ENCODE measurements at regions of chr19 and their contacts with region 1.

Region 1: DNA sequence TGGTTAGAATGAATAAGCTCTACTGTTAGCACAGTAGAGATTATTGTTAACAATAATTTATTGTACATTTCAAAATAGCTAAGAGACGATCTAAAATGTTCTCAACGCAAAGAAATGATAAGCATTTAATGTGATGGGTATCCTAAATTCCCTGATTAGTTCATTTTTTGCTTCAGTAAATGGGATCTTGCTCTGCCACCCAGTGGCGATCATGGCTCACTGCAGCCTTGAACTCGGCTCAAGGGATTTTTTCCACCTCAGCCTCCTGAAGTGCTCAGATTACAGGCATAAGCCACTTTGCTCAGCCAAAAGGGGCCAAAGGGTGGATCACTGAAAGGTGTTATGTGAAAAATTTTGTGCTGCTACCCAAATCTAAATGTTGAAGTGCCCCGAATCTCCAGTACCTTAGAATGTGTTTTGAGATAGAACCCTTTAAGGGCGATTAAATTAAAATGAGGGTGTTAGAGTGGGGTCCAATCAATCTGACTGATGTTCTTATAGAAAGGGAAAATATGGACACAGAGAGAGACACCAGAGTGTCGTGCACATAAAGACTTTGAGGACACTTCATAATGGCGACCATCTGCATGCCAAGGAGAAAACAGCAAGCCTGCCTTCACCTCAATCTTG is 31.5 kb upstream of the ZNF766 start:
- DNase-seq: peak; percentile 29
- H3K4me3 ChIP-seq: no peak overlapping the region
- H3K27ac ChIP-seq: no peak overlapping the region
- H3K4me1 ChIP-seq: no peaks in the 10 kb centered on the region
- H3K27me3 ChIP-seq: no peaks in the 10 kb centered on the region
- CTCF ChIP-seq: peak; percentile 94

Region 2: GRCh38 chr19:52139252-52140031 is 98.4 kb before region 1 on chr19 and contains the start of gene ZNF616:
- intact Hi-C with region 1: loop called (anchors 2 kb)
- DNase-seq: peak; percentile 98
- H3K4me3 ChIP-seq: peak within 1 kb of the TSS; percentile 89
- H3K27ac ChIP-seq: peak within 1 kb of the TSS; percentile 97
- H3K4me1 ChIP-seq: peaks cover 27% of the 10 kb centered on the region
- H3K27me3 ChIP-seq: no peaks in the 10 kb centered on the region
- CTCF ChIP-seq: peak; percentile 87
- total RNA-seq, gene ZNF616: 5.6 TPM

Region 3: DNA sequence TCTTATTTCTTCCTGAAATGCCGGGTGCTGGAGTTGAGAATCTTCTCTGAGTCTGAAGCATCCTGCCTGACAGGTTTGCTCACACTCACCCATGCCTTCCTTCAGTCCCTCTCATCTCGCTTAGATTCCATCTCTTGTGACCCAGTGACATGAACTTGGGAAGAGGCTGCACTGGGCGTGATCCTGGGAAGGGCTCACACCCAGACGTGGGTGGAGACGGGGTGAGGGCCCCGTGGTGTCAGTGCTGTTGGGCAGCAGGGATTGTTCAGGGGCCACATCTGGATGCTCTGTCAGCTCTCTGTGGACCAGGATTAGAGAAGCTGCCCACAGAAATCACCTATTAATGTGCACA is 39.7 kb after region 1 on chr19:
- intact Hi-C with region 1: no loop called
- DNase-seq: no peak
- H3K4me3 ChIP-seq: no peak overlapping the region
- H3K27ac ChIP-seq: no peak overlapping the region
- H3K4me1 ChIP-seq: peaks cover 29% of the 10 kb centered on the region
- H3K27me3 ChIP-seq: no peaks in the 10 kb centered on the region
- CTCF ChIP-seq: no peak